ENCODE measurements at regions of chr3 and their contacts with region 1.

Region 1: DNA sequence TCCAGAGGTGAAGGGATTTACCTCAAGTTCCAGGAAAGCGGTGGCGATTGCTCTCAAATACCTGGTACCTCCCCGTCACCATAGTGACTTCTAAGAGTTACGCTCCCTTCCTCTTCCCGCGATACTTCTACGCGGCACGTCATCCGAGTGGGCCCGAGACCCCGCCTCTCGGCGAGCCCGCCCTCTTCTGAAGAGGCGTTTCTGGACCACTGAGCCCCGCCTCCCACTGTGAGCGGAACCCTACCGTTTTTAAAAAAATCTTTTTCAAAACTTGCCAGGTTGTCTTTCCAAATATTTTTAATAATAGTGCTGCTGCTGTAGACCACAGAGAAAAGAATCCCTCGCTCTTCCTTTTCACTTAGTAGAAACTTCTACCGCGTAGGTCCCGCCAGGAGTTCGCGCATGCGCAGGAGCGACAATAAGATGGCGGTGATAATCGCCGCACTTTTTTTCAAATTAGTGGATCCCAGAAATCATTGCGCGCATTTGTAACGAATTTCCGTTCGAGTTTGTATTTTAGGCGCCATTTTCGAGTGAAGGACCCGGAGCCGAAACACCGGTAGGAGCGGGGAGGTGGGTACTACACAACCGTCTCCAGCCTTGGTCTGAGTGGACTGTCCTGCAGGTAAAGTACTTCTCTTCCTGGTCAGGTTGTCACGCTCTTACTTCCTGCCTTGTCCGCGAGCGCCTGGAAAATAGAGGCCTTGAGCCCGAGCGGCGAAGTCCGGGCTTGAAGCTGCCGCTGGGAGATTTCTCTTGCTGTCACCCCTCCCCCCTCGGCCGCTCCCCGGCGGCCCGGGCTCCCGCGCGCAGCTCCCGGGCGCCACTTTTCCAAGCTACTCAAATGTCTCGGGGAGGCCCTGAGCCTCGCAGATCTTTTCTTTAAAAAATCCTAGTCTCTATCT is at the starts of genes IFT80 and SMC4:
- DNase-seq: peak; percentile 98
- ATAC-seq: peak; percentile 90
- H3K4me3 ChIP-seq: peak within 1 kb of the TSS; percentile 92
- H3K27ac ChIP-seq: peak within 1 kb of the TSS; percentile 93
- H3K4me1 ChIP-seq: peaks cover 29% of the 10 kb centered on the region
- H3K27me3 ChIP-seq: no peaks in the 10 kb centered on the region
- CTCF ChIP-seq: no peak
- total RNA-seq, gene IFT80: 9.1 and 9.3 TPM in 2 replicates
- total RNA-seq, gene SMC4: 129 and 183 TPM in 2 replicates

Region 2: DNA sequence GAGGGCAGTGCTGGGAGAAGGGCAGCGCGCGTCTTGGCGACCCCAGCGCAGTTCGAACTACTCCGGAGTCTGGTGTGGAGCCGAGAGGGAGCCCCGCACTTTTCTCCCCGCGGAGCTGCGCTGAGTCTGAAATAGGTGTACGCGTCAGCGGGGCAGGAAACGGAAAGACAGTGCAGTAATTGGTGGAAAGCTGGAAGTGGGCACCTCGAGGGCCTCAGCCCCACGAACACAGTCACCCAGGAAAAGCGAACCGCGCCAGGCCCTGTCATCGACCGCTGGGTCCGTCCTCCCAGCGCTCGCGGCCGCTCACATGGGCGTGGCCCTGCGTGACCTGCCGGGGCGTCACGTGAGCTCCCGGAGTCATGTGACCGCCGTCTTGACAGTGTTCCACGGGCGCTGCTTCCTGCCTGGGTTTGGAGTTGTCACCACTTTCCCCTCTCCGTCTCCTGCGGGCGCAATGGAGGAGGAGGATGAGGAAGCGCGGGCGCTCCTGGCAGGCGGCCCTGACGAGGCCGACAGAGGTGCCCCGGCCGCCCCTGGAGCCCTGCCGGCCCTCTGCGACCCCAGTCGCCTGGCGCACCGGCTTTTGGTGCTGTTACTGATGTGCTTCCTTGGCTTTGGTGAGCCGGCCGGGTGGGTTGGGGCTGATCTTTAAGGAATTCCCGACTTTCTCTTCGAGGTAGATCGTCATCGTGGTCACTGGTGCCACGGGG is 1597.5 kb before region 1 on chr3 and contains the start of gene MFSD1:
- CTCF ChIA-PET with region 1: no interaction called
- POLR2A ChIA-PET with region 1: interaction called, 27 read pairs
- intact Hi-C with region 1: no loop called
- DNase-seq: peak; percentile 86
- ATAC-seq: peak; percentile 73
- H3K4me3 ChIP-seq: peak within 1 kb of the TSS; percentile 94
- H3K27ac ChIP-seq: peak within 1 kb of the TSS; percentile 71
- H3K4me1 ChIP-seq: peaks cover 33% of the 10 kb centered on the region
- H3K27me3 ChIP-seq: no peaks in the 10 kb centered on the region
- CTCF ChIP-seq: no peak
- total RNA-seq, gene MFSD1: 45.2 and 45.3 TPM in 2 replicates

Region 3: DNA sequence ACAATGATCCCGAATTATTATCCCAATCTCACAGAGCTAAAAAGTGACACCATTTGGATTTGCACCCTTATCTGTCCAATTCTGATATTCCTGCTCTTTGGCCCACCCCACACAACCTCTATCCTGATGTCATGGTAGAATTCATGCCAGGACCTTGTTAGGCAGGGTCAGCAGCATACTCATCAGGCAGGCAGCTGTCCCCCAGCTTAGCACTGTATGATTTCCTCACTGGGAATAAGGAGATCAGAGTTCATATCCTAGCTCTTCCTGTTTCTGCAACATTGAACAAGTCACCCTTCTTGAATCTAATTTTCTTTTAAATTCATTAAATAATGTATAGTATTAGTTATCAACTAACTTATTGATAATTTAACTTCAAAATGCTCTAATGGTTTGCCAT is 186.2 kb before region 1 on chr3:
- CTCF ChIA-PET with region 1: no interaction called
- POLR2A ChIA-PET with region 1: no interaction called
- intact Hi-C with region 1: no loop called
- DNase-seq: no peak
- ATAC-seq: no peak
- H3K4me3 ChIP-seq: no peak overlapping the region
- H3K27ac ChIP-seq: no peak overlapping the region
- H3K4me1 ChIP-seq: no peaks in the 10 kb centered on the region
- H3K27me3 ChIP-seq: peaks cover 14% of the 10 kb centered on the region
- CTCF ChIP-seq: no peak

Region 4: DNA sequence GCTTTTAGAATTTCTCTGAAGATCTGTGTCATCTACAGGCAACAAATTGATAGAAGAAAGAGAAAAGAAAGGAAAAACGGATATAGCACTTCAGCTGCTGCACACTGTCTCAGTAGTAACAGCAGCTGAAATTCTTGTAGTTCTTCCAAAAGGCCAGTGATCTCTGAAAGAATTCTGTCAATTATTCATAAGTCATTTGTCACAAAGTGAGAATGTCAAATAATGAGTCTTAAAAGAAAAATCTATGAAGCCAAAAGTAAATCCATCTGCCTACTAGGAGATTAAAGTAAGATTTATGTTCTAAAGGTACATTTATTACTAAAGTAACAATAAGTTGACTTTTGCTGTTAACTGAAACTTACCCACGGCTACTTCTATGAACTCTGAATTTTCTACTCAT is 24.9 kb before region 1 on chr3:
- CTCF ChIA-PET with region 1: no interaction called
- POLR2A ChIA-PET with region 1: no interaction called
- intact Hi-C with region 1: loop called (anchors 1 kb)
- DNase-seq: peak; percentile 75
- ATAC-seq: peak; percentile 50
- H3K4me3 ChIP-seq: peak overlapping the region; percentile 2; the same call in 1 of the 2 replicates
- H3K27ac ChIP-seq: peak overlapping the region; percentile 26
- H3K4me1 ChIP-seq: peaks cover 47% of the 10 kb centered on the region
- H3K27me3 ChIP-seq: no peaks in the 10 kb centered on the region
- CTCF ChIP-seq: no peak

Region 5: GRCh38 chr3:160381470-160381869 is 17.9 kb before region 1 on chr3:
- CTCF ChIA-PET with region 1: no interaction called
- POLR2A ChIA-PET with region 1: no interaction called
- intact Hi-C with region 1: loop called (anchors 1 kb)
- DNase-seq: peak; percentile 44
- ATAC-seq: peak; percentile 85
- H3K4me3 ChIP-seq: no peak overlapping the region
- H3K27ac ChIP-seq: no peak overlapping the region
- H3K4me1 ChIP-seq: peaks cover 25% of the 10 kb centered on the region
- H3K27me3 ChIP-seq: no peaks in the 10 kb centered on the region
- CTCF ChIP-seq: no peak

Region 6: DNA sequence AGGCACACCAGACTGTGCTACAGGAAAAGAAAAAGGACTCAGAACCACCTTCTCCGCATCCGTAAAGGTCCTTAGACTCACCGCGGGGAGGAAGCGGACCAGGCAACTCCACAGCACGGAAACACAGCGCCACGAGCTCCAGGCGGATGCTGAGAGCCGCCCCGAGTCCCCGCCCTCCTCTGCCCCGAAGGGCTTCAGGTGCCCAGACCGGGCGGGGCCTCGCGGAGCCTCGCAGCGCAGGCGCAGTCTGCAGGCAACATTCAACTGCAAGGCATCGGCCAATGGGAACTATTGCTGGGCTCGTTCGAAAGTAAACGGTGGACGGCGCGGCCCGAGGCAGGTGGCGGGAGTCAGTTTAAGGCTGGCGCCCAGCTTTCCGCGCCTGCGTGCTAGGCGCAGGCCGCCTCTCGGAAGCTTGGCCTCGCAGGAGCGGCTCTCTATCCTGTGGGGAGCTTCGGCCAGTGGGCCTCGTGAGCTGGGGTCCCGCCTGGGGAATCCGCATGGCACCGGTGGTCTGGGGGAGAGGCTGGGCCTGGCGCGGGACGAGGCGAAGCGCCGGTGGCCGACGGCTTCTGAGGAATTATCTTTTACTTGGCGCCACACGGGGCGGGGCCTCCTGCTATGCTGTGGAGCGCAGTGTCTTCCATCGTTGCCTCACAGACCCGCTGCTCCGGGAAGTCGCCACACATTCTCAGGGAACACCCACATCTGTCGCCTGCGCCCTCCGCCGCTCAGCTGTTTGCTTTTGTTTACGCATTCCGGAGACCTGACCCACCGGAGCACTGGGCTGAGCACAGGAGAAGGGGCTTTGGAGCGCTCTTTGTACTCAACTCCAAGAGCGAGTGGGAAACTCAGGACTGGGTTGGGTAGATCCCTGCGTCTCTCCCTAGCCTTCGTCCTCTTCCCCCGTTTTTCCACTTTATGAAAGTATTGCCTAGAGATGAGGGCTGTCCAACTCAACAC is 50.5 kb after region 1 on chr3 and contains the start of gene TRIM59:
- CTCF ChIA-PET with region 1: no interaction called
- POLR2A ChIA-PET with region 1: no interaction called
- intact Hi-C with region 1: loop called (anchors 2 kb)
- DNase-seq: peak; percentile 97
- ATAC-seq: peak; percentile 87
- H3K4me3 ChIP-seq: peak within 1 kb of the TSS; percentile 76
- H3K27ac ChIP-seq: peak within 1 kb of the TSS; percentile 69
- H3K4me1 ChIP-seq: peaks cover 42% of the 10 kb centered on the region
- H3K27me3 ChIP-seq: no peaks in the 10 kb centered on the region
- CTCF ChIP-seq: no peak
- total RNA-seq, gene TRIM59: 25.3 and 26.4 TPM in 2 replicates

Region 7: GRCh38 chr3:160748231-160748630 is 348.9 kb after region 1 on chr3:
- CTCF ChIA-PET with region 1: no interaction called
- POLR2A ChIA-PET with region 1: no interaction called
- intact Hi-C with region 1: no loop called
- DNase-seq: no peak
- ATAC-seq: no peak
- H3K4me3 ChIP-seq: no peak overlapping the region
- H3K27ac ChIP-seq: no peak overlapping the region
- H3K4me1 ChIP-seq: no peaks in the 10 kb centered on the region
- H3K27me3 ChIP-seq: no peaks in the 10 kb centered on the region
- CTCF ChIP-seq: no peak

Measured in PC-3 (cell line).